ENCODE measurements at regions of chr2 and their contacts with region 1.

Region 1: GRCh38 chr2:147937744-147938349 is 82.7 kb downstream of the ORC4 start:
- DNase-seq: no peak
- H3K4me3 ChIP-seq: no peak overlapping the region
- H3K27ac ChIP-seq: no peak overlapping the region
- H3K4me1 ChIP-seq: peaks cover 0 to 23% (median 14%) of the 10 kb centered on the region in 4 donors
- H3K27me3 ChIP-seq: no peaks in the 10 kb centered on the region
- CTCF ChIP-seq: peak; percentile 87 to 90 (median 87)
- EP300 ChIP-seq: no peak
- POLR2A ChIP-seq: no peak

Region 2: DNA sequence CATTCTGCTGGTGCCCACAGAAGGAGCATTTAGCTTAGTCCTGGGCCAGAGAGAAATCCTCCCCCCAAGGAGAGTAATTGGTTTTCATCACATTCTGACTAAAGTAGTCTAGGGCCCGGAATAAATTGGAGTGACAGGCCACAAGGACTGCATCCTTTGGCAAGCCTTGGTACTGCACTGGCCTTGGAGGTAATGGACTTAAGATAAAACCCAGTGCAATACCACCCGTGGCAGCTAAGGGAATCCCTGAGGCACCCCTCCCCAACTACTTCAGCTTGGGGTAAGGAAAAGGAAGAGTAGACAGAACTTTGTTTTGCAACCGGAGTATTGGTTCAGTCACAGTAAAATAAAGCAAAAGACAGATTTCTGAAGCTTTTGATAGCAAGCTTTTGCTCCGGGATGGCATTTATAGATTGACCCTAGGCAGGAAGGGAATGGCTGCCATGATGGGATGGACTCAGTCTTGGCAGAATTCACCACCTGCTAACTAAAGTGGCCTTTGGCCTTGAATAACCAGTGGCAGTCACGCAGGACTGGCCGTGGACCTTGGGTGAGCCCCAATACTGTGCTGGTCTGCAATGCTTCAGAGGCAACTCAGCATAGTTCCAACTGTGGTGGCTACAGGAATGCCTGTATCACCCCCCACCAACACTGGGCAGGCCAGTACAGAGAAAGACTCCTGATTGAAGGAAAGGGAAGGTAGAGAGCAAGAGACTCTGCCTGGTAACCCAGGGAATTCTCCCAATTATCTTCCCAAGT is 68.6 kb after region 1 on chr2:
- intact Hi-C with region 1: no loop called
- DNase-seq: no peak
- H3K4me3 ChIP-seq: no peak overlapping the region
- H3K27ac ChIP-seq: no peak overlapping the region
- H3K4me1 ChIP-seq: no peaks in the 10 kb centered on the region
- H3K27me3 ChIP-seq: no peaks in the 10 kb centered on the region
- CTCF ChIP-seq: no peak
- EP300 ChIP-seq: no peak
- POLR2A ChIP-seq: no peak

Region 3: GRCh38 chr2:148067801-148068200 is 130.0 kb after region 1 on chr2:
- intact Hi-C with region 1: no loop called
- DNase-seq: no peak
- H3K4me3 ChIP-seq: no peak overlapping the region
- H3K27ac ChIP-seq: no peak overlapping the region
- H3K4me1 ChIP-seq: peaks cover 0 to 10% (median 4%) of the 10 kb centered on the region in 4 donors
- H3K27me3 ChIP-seq: no peaks in the 10 kb centered on the region
- CTCF ChIP-seq: no peak
- EP300 ChIP-seq: no peak
- POLR2A ChIP-seq: no peak

Region 4: GRCh38 chr2:148110184-148110583 is 172.3 kb after region 1 on chr2:
- intact Hi-C with region 1: no loop called
- DNase-seq: no peak
- H3K4me3 ChIP-seq: no peak overlapping the region
- H3K27ac ChIP-seq: no peak overlapping the region
- H3K4me1 ChIP-seq: peaks cover 0 to 7% (median 5%) of the 10 kb centered on the region in 4 donors
- H3K27me3 ChIP-seq: no peaks in the 10 kb centered on the region
- CTCF ChIP-seq: no peak
- EP300 ChIP-seq: no peak
- POLR2A ChIP-seq: no peak

Region 5: DNA sequence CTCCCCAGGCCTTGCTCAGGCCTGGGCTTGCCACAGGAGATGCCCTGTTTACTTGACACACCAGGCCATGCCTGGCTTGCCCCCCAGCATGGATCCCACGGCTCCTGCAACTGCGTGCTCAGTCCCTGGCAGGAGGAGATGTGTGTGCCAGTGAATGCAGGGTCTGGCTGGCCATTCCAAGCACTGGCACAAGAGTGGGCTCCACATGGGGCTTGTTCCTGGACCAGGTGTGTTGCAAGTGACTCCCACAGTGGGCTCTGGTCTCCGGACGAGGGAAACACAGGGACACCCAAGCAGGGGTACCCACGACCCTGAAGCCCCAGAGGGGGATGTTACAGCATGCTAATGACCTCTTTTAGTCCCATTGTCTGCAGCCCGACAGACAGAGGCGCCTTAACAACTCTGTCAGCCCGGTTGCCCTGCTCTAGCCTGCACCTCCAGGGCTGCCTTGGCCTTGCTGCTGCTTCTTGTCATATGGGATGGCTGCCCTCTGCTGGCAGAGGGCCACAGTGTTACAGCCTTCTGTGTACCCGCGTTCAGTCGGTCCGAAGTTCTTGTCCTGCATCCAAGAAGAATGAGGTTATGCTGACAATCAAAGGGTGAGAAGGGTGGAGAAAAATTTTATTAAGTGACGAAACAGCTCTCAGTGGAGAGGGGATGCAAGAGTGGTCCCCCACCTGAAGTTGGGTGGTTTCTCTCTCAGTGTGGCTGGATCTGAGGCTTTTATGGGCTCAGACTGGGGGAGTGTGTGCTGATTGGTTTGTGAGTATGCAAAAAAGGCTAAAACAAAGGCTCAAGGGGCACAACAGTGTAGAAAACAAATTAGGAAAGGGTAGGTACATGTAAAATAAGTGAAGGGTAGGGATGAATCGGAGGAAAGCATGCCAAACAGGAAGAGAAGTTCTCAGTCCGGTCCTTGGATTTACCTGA is 263.5 kb after region 1 on chr2:
- intact Hi-C with region 1: loop called (anchors 5 kb)
- DNase-seq: no peak
- H3K4me3 ChIP-seq: no peak overlapping the region
- H3K27ac ChIP-seq: no peak overlapping the region
- H3K4me1 ChIP-seq: peaks cover 0 to 8% (median 5%) of the 10 kb centered on the region in 4 donors
- H3K27me3 ChIP-seq: no peaks in the 10 kb centered on the region
- CTCF ChIP-seq: peak; percentile 59 to 66 (median 61)
- EP300 ChIP-seq: no peak
- POLR2A ChIP-seq: no peak

Region 6: GRCh38 chr2:148509288-148509902 is 571.5 kb after region 1 on chr2:
- intact Hi-C with region 1: loop called (anchors 5 kb)
- DNase-seq: peak; percentile 94
- H3K4me3 ChIP-seq: peak overlapping the region; percentile 22 to 51 (median 31)
- H3K27ac ChIP-seq: no peak overlapping the region
- H3K4me1 ChIP-seq: peaks cover 0 to 14% (median 6%) of the 10 kb centered on the region in 4 donors
- H3K27me3 ChIP-seq: no peaks in the 10 kb centered on the region
- CTCF ChIP-seq: peak; percentile 65 to 89 (median 68)
- EP300 ChIP-seq: no peak
- POLR2A ChIP-seq: no peak

Region 7: GRCh38 chr2:148989882-148990493 is 1052.1 kb after region 1 on chr2:
- intact Hi-C with region 1: loop called (anchors 2 kb)
- DNase-seq: no peak
- H3K4me3 ChIP-seq: no peak overlapping the region
- H3K27ac ChIP-seq: no peak overlapping the region
- H3K4me1 ChIP-seq: peaks cover 0 to 5% (median 0%) of the 10 kb centered on the region in 4 donors
- H3K27me3 ChIP-seq: peaks cover 0 to 3% (median 0%) of the 10 kb centered on the region in 4 donors
- CTCF ChIP-seq: peak; percentile 64 to 77 (median 65)
- EP300 ChIP-seq: no peak
- POLR2A ChIP-seq: no peak